AG04450 (cell line): ENCODE measurements at regions of chr1 and their contacts with region 1.

Region 1: DNA sequence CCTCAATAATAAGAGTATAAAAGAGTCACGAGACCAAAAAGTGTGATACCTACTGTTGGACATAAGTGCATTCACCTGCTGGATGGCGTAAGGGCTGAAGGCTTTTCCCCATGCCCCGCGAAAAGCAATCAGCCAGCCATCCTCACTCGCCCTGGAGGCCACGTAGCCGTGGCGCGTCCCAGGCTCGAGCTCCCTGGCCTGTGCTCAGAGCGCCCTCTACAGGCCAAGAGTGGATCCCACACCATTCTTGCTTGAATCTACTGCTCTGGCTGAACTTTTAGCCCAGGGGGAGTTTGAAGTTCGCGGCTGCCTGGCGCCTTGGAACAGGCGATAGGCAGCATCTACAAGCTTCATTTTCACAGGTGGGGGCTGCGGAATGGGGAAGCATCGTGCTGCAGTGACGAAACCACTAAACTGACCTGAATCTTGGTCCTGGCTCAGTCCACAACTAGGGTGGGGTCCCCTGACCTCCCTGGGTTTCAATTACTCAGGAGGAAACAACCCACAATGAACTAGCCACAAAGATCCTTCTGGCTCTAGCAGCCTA is 70.3 kb upstream of the SERBP1 start:
- DNase-seq: peak; percentile 59
- H3K4me3 ChIP-seq: no peak overlapping the region
- H3K27ac ChIP-seq: no peak overlapping the region
- H3K27me3 ChIP-seq: peaks cover 3% of the 10 kb centered on the region
- CTCF ChIP-seq: peak; percentile 99

Region 2: DNA sequence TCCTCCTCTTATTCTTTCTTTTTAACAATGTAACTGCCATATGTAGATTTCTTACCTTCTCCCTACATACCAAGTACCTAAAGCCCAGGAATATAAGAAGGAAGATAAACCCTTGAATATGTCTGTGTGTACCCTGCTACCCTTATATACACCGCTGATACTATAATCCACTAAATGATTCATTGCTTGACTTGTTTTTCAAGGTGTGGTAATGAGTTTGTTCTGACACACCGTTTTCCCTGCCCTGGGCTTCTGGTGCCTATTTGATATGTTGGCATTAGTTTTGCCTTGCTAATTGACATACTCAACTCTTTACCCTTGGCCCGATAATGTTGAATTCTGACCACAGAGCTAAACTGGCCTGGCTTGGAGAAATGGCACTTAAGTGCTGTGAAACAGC is 269.9 kb before region 1 on chr1:
- CTCF ChIA-PET with region 1: interaction called, 30 read pairs
- POLR2A ChIA-PET with region 1: no interaction called
- DNase-seq: no peak
- H3K4me3 ChIP-seq: no peak overlapping the region
- H3K27ac ChIP-seq: no peak overlapping the region
- H3K27me3 ChIP-seq: peaks cover 6% of the 10 kb centered on the region
- CTCF ChIP-seq: no peak

Region 3: DNA sequence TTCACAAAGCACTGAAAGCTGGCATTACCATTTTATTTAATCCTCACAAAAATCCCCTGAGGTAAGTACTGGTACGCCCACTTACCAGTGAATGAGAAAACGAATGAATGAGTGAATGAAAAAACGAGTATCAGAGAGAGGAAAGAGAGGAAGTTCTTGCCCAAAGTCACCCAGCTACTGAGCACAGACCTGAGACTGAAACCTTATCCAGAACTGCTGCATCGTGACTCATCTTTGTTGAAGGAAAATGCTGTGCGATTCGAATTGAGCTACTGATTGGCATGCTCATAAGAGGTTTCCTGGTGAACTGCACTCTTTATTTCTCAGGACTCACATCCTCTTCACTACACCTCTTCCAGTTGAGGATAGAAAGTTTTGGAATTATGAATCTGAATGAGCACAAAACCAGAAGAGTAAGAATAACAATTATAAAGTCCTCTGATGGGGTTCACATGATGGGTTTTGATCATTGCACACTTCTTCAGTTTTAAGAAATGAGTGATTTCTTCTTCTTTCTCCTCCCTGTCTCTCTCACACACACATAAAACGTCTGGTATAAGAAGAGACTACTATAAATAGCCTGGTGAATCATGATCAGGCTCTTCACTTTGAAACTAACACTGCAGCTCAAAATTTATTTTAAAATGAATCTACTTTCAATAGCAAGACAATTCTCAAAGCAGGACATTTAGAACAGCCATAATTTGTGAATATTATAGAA is 160.7 kb before region 1 on chr1:
- CTCF ChIA-PET with region 1: interaction called, 218 read pairs
- POLR2A ChIA-PET with region 1: no interaction called
- DNase-seq: peak; percentile 20
- H3K4me3 ChIP-seq: no peak overlapping the region
- H3K27ac ChIP-seq: no peak overlapping the region
- H3K27me3 ChIP-seq: no peaks in the 10 kb centered on the region
- CTCF ChIP-seq: no peak

Region 4: GRCh38 chr1:67430352-67431155 is 69.9 kb before region 1 on chr1 and contains the start of gene SERBP1:
- CTCF ChIA-PET with region 1: interaction called, 14 read pairs
- POLR2A ChIA-PET with region 1: interaction called, 4 read pairs
- DNase-seq: peak; percentile 91
- H3K4me3 ChIP-seq: peak within 1 kb of the TSS; percentile 85
- H3K27ac ChIP-seq: peak within 1 kb of the TSS; percentile 48
- H3K27me3 ChIP-seq: no peaks in the 10 kb centered on the region
- CTCF ChIP-seq: no peak
- polyA plus RNA-seq, gene SERBP1: 180 and 273 TPM in 2 replicates

Region 5: DNA sequence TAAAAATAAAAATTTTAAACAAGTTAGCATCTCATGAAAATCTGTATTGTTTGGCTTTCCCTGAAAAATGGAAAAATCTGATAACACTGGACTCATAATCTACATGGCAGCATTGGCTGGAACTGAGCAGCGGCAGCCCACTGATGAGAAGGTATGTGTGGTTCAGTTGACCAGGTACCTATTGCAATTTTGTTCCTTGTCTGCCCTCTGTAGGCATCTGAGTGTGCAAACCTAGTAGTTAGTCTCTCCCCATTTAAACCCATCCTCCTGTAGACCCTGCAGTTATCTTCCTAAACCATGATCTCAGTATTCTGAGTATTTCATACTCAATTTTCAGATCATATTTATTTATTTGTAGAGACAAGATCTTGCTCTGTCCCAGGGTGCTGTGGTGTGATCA is 10.8 kb before region 1 on chr1:
- CTCF ChIA-PET with region 1: interaction called, 31 read pairs
- POLR2A ChIA-PET with region 1: no interaction called
- DNase-seq: no peak
- H3K4me3 ChIP-seq: no peak overlapping the region
- H3K27ac ChIP-seq: no peak overlapping the region
- H3K27me3 ChIP-seq: peaks cover 9% of the 10 kb centered on the region
- CTCF ChIP-seq: peak; percentile 36